Caco-2 (cell line): ENCODE measurements at regions of chr1 and their contacts with region 1.

Region 1: DNA sequence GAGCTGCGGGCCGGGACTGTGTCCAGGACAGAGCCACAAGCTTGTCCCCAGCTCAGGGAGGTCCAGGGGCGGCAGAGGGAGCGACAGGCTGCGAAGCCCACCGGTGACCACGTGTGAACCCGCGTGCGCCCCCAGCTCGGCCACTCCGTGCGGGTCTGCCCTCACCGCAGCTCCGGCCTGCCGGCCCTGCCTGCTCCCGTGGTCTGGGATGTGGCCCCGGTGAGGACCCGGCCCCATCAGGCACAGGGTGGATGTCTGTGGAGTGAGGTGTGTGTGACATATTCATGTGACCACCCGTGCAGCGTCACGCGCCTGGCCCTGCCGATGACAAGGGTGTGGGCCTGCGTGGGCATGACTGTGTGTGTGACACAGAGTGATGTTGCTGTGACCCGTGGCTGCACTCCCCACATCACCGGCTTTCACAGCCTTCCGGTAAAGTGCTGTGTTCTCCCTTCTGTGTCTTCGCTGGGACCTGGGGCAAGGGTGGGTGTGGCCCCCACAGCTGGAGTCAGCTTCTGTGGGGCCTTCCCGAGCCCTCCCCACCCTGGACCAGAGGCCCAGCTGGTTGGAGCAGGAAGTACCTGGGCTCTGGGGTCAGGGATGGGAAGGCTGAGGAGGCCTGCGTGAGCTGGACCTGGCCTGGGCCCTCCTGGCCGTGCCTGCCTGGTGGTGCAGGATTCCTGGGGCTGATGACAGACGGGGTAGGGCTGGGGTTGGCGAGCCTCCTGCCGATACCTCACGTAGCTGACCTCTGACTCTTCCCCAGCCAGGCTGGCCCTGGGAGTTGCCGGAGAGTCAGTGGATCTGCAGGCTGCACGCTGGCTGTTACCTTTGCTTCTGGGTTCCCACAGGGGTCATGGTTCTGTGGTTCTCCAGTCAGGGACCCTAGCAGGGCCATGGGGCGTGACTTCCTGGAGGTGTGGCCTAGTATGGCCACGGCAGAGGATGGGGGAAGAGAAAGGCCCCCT is 4.1 kb downstream of the RNF223 start:
- DNase-seq: no peak
- H3K4me3 ChIP-seq: peak overlapping the region; percentile 72
- H3K4me3 Mint-ChIP-seq: no peak overlapping the region
- H3K27ac Mint-ChIP-seq: no peak overlapping the region
- H3K4me1 ChIP-seq: peaks cover 26% of the 10 kb centered on the region
- H3K4me1 Mint-ChIP-seq: peaks cover 7% of the 10 kb centered on the region
- H3K27me3 ChIP-seq: no peaks in the 10 kb centered on the region
- H3K27me3 Mint-ChIP-seq: no peaks in the 10 kb centered on the region
- CTCF ChIP-seq: no peak

Region 2: GRCh38 chr1:999725-1000356 is 70.2 kb before region 1 on chr1 and contains the start of gene HES4:
- CTCF ChIA-PET with region 1: no interaction called
- POLR2A ChIA-PET with region 1: interaction called, 4 read pairs
- intact Hi-C with region 1: loop called (anchors 5 kb)
- DNase-seq: peak; percentile 95
- H3K4me3 ChIP-seq: peak within 1 kb of the TSS; percentile 87
- H3K4me3 Mint-ChIP-seq: peak within 1 kb of the TSS; percentile 79
- H3K27ac Mint-ChIP-seq: peak within 1 kb of the TSS; percentile 96
- H3K4me1 ChIP-seq: peaks cover 40% of the 10 kb centered on the region
- H3K4me1 Mint-ChIP-seq: peaks cover 5% of the 10 kb centered on the region
- H3K27me3 ChIP-seq: no peaks in the 10 kb centered on the region
- H3K27me3 Mint-ChIP-seq: no peaks in the 10 kb centered on the region
- CTCF ChIP-seq: no peak
- total RNA-seq, gene HES4: 45.5 and 53.8 TPM in 2 replicates

Region 3: GRCh38 chr1:1115786-1116700 is 46.0 kb after region 1 on chr1 and contains the start of gene C1orf159:
- CTCF ChIA-PET with region 1: no interaction called
- POLR2A ChIA-PET with region 1: no interaction called
- intact Hi-C with region 1: loop called (anchors 5 kb)
- DNase-seq: peak; percentile 97
- H3K4me3 ChIP-seq: peak within 1 kb of the TSS; percentile 82
- H3K4me3 Mint-ChIP-seq: peak within 1 kb of the TSS; percentile 81
- H3K27ac Mint-ChIP-seq: peak within 1 kb of the TSS; percentile 59
- H3K4me1 ChIP-seq: no peaks in the 10 kb centered on the region
- H3K4me1 Mint-ChIP-seq: no peaks in the 10 kb centered on the region
- H3K27me3 ChIP-seq: no peaks in the 10 kb centered on the region
- H3K27me3 Mint-ChIP-seq: no peaks in the 10 kb centered on the region
- CTCF ChIP-seq: no peak
- total RNA-seq, gene C1orf159: 12.9 and 14.0 TPM in 2 replicates